SK-N-SH (cell line): ENCODE measurements at regions of chr15 and their contacts with region 1.

Region 1: DNA sequence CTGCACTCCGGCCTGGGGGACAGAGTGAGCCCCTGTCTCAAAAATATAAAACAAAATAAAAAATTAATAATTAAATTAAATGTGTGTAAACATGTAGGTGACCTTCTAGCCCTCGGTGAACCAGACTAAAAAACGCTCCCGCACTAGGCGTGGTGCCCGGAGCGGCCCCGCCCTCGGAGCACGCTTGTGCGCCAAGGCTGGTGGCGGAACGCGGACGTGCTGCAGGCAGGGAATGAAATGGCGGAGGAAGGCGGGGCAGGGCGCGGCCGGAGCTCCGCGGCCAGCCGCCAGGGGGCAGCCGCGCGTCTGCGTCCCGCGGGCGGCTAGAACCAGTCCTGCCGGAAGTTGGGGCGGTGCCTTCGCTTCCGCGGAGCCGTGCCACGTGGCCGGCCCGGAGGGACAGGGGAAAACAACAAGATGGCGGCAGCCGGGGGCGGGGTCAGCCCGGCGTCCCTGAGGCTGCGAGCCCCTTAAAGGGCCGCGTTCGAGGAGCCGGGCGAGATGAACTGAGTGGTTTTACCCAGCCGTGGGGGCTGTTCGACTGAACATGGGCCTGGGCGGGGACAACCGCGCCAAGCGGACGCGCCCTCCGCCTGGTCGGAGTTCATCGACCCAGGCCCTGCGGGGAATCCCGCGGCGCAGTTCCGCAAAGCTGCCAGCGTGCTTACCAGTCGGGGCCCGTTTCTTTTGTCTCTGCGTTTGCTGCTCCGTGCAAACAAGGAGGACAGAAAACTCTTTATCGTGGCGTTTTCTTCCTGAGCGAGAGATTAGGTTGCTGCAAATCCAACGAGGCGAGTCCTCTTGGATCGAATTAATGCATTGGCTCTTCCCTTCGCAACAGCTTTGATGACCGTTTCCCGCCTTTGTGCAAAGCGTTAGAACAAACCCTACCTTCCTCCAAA is 90.9 kb upstream of the CHD2 start:
- DNase-seq: peak; percentile 94
- H3K4me3 ChIP-seq: peak overlapping the region; percentile 40 to 41; a peak in 3 of 4 replicates
- H3K27ac ChIP-seq: peak overlapping the region; percentile 81 to 88
- H3K4me1 ChIP-seq: no peaks in the 10 kb centered on the region; a peak in 1 of 4 replicates
- H3K27me3 ChIP-seq: no peaks in the 10 kb centered on the region
- CTCF ChIP-seq: peak; percentile 77
- EP300 ChIP-seq: peak; percentile 18 to 20; a peak in 2 of 4 replicates
- RAD21 ChIP-seq: peak; percentile 78

Region 2: DNA sequence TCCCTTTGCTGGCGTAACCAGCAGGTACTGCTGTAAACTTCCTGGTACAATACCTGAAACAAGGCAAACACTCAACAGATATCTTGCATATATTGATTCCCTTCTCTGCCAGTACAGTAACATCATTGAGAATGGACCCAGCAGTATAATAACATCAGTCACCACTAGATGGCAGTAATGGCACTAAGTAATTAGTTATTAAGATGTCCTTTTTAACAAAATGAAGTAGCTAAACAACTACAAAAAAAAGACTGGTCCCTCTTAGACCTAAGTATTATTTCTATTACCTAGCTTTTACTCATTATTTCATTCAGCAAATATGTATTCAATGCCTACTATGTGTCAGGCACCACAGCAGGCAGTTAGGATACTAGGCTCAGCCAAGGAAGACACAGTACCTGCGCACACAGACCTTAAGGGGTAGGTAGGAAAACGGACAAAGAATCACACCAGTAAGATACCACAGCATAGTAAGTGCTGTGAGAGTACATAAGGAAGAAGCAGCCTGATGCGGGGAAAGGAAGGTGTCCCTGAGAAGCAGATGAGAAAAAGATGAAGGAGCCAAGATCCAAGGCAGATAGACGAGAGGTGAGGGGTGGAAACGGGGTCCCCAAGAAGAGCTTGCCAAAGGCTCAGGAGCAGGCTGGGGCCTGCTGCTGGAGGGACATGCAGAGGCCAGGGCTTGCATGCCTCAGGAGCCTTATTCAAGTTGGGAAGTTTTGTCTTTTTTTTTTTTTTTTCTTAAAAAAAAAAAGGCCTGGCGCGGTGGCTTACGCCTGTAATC is 11.9 kb before region 1 on chr15:
- CTCF ChIA-PET with region 1: interaction called, 26 read pairs
- POLR2A ChIA-PET with region 1: no interaction called
- DNase-seq: peak; percentile 62
- H3K4me3 ChIP-seq: no peak overlapping the region
- H3K27ac ChIP-seq: peak overlapping the region in 1 of 2 experiments; percentile 27; a peak in 1 of 4 replicates
- H3K4me1 ChIP-seq: no peaks in the 10 kb centered on the region
- H3K27me3 ChIP-seq: no peaks in the 10 kb centered on the region
- CTCF ChIP-seq: peak; percentile 80
- EP300 ChIP-seq: no peak
- RAD21 ChIP-seq: peak; percentile 80

Region 3: GRCh38 chr15:92831655-92832328 is 22.6 kb after region 1 on chr15:
- CTCF ChIA-PET with region 1: interaction called, 14 read pairs
- POLR2A ChIA-PET with region 1: interaction called, 5 read pairs
- DNase-seq: peak; percentile 85
- H3K4me3 ChIP-seq: peak overlapping the region; percentile 7 to 40; a peak in 2 of 4 replicates
- H3K27ac ChIP-seq: peak overlapping the region; percentile 88 to 94
- H3K4me1 ChIP-seq: peaks cover 16 to 26% of the 10 kb centered on the region in 2 experiments
- H3K27me3 ChIP-seq: no peaks in the 10 kb centered on the region
- CTCF ChIP-seq: no peak
- EP300 ChIP-seq: peak in 1 of 2 experiments; percentile 66; a peak in 2 of 4 replicates
- RAD21 ChIP-seq: peak; percentile 33; the same call in 1 of the 2 replicates

Region 4: GRCh38 chr15:92903941-92904831 is 95.0 kb after region 1 on chr15:
- CTCF ChIA-PET with region 1: interaction called, 19 read pairs
- POLR2A ChIA-PET with region 1: interaction called, 12 read pairs
- DNase-seq: peak; percentile 94
- H3K4me3 ChIP-seq: peak overlapping the region; percentile 77 to 86
- H3K27ac ChIP-seq: peak overlapping the region; percentile 99 to 100
- H3K4me1 ChIP-seq: peaks cover 25 to 32% of the 10 kb centered on the region in 2 experiments
- H3K27me3 ChIP-seq: no peaks in the 10 kb centered on the region
- CTCF ChIP-seq: no peak
- EP300 ChIP-seq: peak in 1 of 2 experiments; percentile 73; a peak in 2 of 4 replicates
- RAD21 ChIP-seq: no peak

Region 5: DNA sequence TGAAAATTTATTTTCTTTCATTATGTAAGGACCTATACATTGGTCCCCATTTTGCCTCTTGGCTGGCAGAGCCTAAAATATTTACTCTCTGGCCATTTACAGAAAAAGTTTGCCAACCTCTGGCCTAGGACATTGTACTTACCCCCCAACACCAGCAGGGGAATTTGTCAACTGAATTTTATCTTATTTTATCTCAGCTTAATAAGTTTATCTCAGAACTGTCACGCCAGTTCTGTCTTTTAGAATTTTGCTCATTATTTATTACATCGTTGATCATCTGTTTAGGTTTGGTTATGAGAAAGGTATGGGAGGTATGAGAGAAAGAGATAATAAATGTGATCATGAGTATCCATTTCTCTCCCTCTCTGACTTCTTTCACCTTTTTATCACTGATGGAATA is 129.2 kb after region 1 on chr15:
- CTCF ChIA-PET with region 1: interaction called, 12 read pairs
- POLR2A ChIA-PET with region 1: no interaction called
- DNase-seq: no peak
- H3K4me3 ChIP-seq: no peak overlapping the region
- H3K27ac ChIP-seq: peak overlapping the region in 1 of 2 experiments; percentile 0; a peak in 1 of 4 replicates
- H3K4me1 ChIP-seq: peaks cover 6 to 10% of the 10 kb centered on the region in 2 experiments; a peak in 3 of 4 replicates
- H3K27me3 ChIP-seq: no peaks in the 10 kb centered on the region
- CTCF ChIP-seq: peak; percentile 43
- EP300 ChIP-seq: no peak
- RAD21 ChIP-seq: no peak